ENCODE measurements at regions of chr3 and their contacts with region 1.

Region 1: DNA sequence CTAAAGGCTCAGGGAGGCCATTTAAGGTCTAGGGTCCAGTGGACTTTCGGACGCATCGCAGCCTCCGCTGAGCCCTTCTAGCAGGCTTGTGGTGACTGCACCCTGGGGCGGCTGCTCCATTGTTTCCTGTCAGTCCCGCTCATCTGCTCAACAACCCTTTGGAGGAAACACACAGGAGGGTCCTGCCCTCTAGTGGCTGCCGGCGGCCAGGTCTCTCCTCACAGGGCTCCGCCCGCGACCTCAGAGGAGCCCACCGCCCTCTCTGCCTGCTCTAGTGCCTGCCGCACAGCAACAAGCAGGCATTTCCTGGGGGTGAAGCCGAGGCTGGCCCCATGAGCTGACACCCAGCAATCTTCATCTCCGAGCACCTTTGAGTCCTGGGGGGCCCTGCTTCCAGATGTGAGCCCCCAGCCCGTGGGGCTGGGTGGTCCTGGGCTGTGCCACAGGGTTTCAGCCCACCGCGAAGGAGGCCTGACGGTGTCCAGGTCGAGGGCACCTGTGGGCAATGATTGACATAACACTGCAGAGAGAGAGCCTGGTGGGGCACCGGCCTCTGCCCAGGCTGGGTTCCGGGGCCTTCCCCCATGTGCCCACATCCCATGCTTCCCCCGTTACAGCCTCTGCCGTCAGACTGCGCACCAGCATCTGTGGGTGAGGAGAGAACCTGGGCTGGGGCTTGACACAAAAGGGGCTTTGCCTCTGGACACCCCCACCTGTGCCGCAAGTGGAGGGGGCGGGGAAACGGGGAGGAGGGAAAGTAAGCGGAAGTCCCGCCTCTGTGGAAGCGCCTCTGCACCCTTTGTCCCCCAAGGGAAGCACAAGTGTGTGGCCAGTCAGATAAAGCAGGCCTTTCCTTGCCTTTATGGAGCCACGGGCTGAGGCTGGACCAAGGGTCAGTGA is 27.0 kb upstream of the SFMBT1 start:
- DNase-seq: peak; percentile 69 to 74 (median 73)
- H3K4me3 ChIP-seq: peak overlapping the region; percentile 64 to 99 (median 92)
- H3K4me3 Mint-ChIP-seq: peak overlapping the region; percentile 90 to 95
- H3K27ac ChIP-seq: peak overlapping the region; percentile 24 to 72
- H3K27ac Mint-ChIP-seq: peak overlapping the region; percentile 68 to 90 (median 79)
- H3K4me1 ChIP-seq: peaks cover 19 to 26% of the 10 kb centered on the region in 2 donors
- H3K4me1 Mint-ChIP-seq: peaks cover 23% of the 10 kb centered on the region
- H3K27me3 ChIP-seq: no peaks in the 10 kb centered on the region
- H3K27me3 Mint-ChIP-seq: peaks cover 3 to 6% (median 6%) of the 10 kb centered on the region in 3 donors
- CTCF ChIP-seq: peak; percentile 98

Region 2: GRCh38 chr3:52742418-52743041 is 330.4 kb before region 1 on chr3:
- intact Hi-C with region 1: loop called (anchors 10 kb)
- DNase-seq: peak; percentile 18 to 46 (median 45)
- H3K4me3 ChIP-seq: no peak overlapping the region
- H3K4me3 Mint-ChIP-seq: no peak overlapping the region
- H3K27ac ChIP-seq: no peak overlapping the region
- H3K27ac Mint-ChIP-seq: peak overlapping the region in 1 of 7 donors; percentile 3
- H3K4me1 ChIP-seq: no peaks in the 10 kb centered on the region
- H3K4me1 Mint-ChIP-seq: no peaks in the 10 kb centered on the region
- H3K27me3 ChIP-seq: no peaks in the 10 kb centered on the region
- H3K27me3 Mint-ChIP-seq: peaks cover 0 to 2% (median 1%) of the 10 kb centered on the region in 3 donors
- CTCF ChIP-seq: peak; percentile 87

Region 3: DNA sequence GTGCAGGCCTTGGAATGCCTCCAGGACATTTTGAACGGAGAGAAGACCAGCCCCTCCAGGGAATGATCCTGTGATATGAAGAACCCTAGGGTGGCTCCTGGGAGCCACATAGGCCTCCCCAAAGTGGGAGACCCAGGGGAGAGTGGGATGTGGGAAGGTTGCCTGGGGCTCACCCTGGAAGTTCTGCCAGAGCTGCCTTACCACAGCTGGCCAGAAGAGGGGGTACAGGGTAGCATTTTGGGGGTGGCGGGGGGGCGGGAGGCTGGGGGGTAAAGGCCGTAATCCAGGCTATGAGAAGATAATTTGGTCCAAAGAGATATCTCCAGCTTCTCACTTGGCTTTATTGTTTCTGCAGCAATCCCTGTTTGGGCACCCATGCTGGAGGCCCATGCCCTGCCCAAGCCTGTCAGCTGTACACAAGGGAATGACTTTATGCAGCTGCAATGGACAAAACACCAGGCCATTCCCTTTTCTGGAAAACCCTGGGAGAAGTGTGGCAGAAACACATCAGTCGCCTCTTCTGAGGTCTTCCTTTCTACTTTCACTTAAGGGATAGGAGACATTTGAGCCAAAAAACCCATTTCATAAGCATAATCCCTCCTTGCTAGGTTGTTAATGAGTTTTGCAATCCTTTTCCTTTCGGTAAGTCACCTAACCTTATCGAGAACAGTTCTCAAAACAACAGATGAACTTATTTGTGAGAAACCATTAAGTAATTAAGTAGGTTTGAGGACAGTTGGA is 227.0 kb before region 1 on chr3:
- intact Hi-C with region 1: loop called (anchors 5 to 10 kb)
- DNase-seq: no peak
- H3K4me3 ChIP-seq: no peak overlapping the region
- H3K4me3 Mint-ChIP-seq: no peak overlapping the region
- H3K27ac ChIP-seq: no peak overlapping the region
- H3K27ac Mint-ChIP-seq: no peak overlapping the region
- H3K4me1 ChIP-seq: peaks cover 33 to 36% of the 10 kb centered on the region in 2 donors
- H3K4me1 Mint-ChIP-seq: peaks cover 39% of the 10 kb centered on the region
- H3K27me3 ChIP-seq: no peaks in the 10 kb centered on the region
- H3K27me3 Mint-ChIP-seq: peaks cover 0 to 2% (median 0%) of the 10 kb centered on the region in 3 donors
- CTCF ChIP-seq: peak; percentile 76

Region 4: GRCh38 chr3:52851348-52851747 is 221.6 kb before region 1 on chr3:
- intact Hi-C with region 1: loop called (anchors 5 to 10 kb)
- DNase-seq: peak; percentile 29 to 36 (median 29)
- H3K4me3 ChIP-seq: no peak overlapping the region
- H3K4me3 Mint-ChIP-seq: no peak overlapping the region
- H3K27ac ChIP-seq: no peak overlapping the region
- H3K27ac Mint-ChIP-seq: no peak overlapping the region
- H3K4me1 ChIP-seq: no peaks in the 10 kb centered on the region
- H3K4me1 Mint-ChIP-seq: peaks cover 4% of the 10 kb centered on the region
- H3K27me3 ChIP-seq: no peaks in the 10 kb centered on the region
- H3K27me3 Mint-ChIP-seq: peaks cover 0 to 2% (median 0%) of the 10 kb centered on the region in 3 donors
- CTCF ChIP-seq: peak; percentile 68

Region 5: GRCh38 chr3:52873433-52874159 is 199.3 kb before region 1 on chr3:
- intact Hi-C with region 1: loop called in 1 of 2 experiments (anchors 10 kb)
- DNase-seq: no peak
- H3K4me3 ChIP-seq: no peak overlapping the region
- H3K4me3 Mint-ChIP-seq: no peak overlapping the region
- H3K27ac ChIP-seq: no peak overlapping the region
- H3K27ac Mint-ChIP-seq: no peak overlapping the region
- H3K4me1 ChIP-seq: peaks cover 11 to 12% of the 10 kb centered on the region in 2 donors
- H3K4me1 Mint-ChIP-seq: peaks cover 42% of the 10 kb centered on the region
- H3K27me3 ChIP-seq: no peaks in the 10 kb centered on the region
- H3K27me3 Mint-ChIP-seq: peaks cover 0 to 2% (median 2%) of the 10 kb centered on the region in 3 donors
- CTCF ChIP-seq: no peak

Region 6: DNA sequence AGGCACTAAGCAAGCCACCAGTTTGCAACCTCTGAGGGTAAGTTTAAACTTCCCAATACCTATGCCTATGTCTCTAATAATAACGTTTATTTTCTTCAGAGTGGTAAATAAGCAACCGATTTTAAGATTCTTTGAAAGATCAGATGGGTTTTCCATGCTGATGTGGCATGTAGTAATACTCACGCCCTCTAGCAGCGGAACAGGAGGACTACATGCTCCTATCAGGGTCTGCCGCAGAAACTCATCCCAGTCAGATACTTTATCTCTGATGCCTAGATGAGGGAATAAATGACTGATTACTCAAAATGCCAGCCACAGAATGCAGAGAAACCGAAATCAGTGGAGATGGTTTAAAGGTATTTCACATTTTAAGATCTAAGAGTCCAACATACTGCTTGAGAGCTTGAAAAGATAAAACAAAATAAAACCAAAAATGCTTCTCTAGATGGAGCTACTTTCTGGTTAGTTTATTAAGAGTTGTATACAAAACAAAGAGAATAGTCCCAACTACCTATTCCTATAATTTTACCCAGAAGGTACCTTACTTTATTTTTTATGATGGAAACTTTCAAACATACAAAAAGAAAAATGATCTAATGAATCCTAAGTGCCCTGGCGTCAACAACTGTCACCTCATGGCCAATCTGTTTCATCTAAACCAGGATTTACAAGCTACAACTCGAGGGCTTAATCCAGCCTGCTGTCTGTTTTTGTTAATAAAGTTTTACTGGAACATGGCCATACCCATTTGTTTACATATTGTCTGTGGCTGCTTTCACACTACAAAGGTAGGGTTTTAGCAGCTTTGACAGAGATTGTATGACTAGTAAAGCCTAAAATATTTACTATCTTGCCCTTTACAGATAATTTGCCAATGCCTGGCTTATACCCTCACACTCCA is 138.0 kb before region 1 on chr3:
- intact Hi-C with region 1: loop called in 1 of 2 experiments (anchors 10 kb)
- DNase-seq: peak; percentile 34 to 57 (median 56)
- H3K4me3 ChIP-seq: no peak overlapping the region
- H3K4me3 Mint-ChIP-seq: no peak overlapping the region
- H3K27ac ChIP-seq: no peak overlapping the region
- H3K27ac Mint-ChIP-seq: no peak overlapping the region
- H3K4me1 ChIP-seq: peaks cover 0 to 6% of the 10 kb centered on the region in 2 donors
- H3K4me1 Mint-ChIP-seq: peaks cover 12% of the 10 kb centered on the region
- H3K27me3 ChIP-seq: no peaks in the 10 kb centered on the region
- H3K27me3 Mint-ChIP-seq: peaks cover 0 to 1% (median 0%) of the 10 kb centered on the region in 3 donors
- CTCF ChIP-seq: peak; percentile 84

Region 7: GRCh38 chr3:53040351-53040820 is 32.5 kb before region 1 on chr3:
- intact Hi-C with region 1: no loop called
- DNase-seq: no peak
- H3K4me3 ChIP-seq: no peak overlapping the region
- H3K4me3 Mint-ChIP-seq: no peak overlapping the region
- H3K27ac ChIP-seq: no peak overlapping the region
- H3K27ac Mint-ChIP-seq: peak overlapping the region in 1 of 7 donors; percentile 57
- H3K4me1 ChIP-seq: peaks cover 5 to 9% of the 10 kb centered on the region in 2 donors
- H3K4me1 Mint-ChIP-seq: peaks cover 14% of the 10 kb centered on the region
- H3K27me3 ChIP-seq: peaks cover 0 to 19% of the 10 kb centered on the region in 2 donors
- H3K27me3 Mint-ChIP-seq: peaks cover 6 to 25% (median 15%) of the 10 kb centered on the region in 3 donors
- CTCF ChIP-seq: no peak

Measured in CD14-positive monocyte (primary cell).